ENCODE measurements at regions of chr6 and their contacts with region 1.

Region 1: GRCh38 chr6:157993076-157993475 is 11.4 kb downstream of the SYNJ2 start:
- DNase-seq: no peak
- H3K4me3 ChIP-seq: no peak overlapping the region
- H3K27ac ChIP-seq: no peak overlapping the region
- H3K4me1 ChIP-seq: peaks cover 28% of the 10 kb centered on the region
- H3K27me3 ChIP-seq: no peaks in the 10 kb centered on the region
- CTCF ChIP-seq: no peak

Region 2: DNA sequence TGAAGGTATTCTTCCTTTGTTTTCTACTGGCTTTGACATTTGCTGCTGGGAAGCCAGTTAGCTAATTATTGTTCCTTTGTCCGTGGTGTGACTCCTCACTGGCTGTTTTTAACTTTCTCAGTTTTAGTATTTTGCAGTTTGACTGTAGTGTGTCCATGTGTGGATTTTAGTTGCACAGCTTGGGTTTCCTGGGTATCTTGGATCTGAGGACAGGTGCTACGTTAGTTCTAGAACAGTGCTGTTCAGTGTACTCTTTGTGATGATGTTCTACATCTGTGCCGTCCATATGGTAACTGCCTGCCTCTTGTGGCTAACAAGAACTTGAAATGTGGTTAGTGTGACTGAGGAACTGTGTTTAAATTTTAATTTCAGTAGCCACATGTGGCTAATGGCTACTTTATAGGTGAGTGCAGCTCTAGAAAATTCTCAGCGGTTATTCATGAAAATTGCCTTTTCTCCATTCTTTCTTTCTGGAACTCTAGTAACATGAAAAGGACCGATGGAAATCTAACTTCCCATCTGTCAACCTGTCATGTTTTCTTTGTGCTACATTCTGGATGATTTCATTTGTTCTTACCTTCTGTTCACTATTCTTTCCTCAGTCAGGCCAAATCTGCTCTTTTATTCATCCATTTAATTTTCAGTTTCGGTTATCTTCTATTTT is 162.6 kb before region 1 on chr6:
- CTCF ChIA-PET with region 1: no interaction called
- dilution Hi-C with region 1: no loop called
- in situ Hi-C with region 1: no loop called
- intact Hi-C with region 1: no loop called
- DNase-seq: peak; percentile 16
- H3K4me3 ChIP-seq: no peak overlapping the region
- H3K27ac ChIP-seq: no peak overlapping the region
- H3K4me1 ChIP-seq: peaks cover 45% of the 10 kb centered on the region
- H3K27me3 ChIP-seq: no peaks in the 10 kb centered on the region
- CTCF ChIP-seq: no peak

Region 3: GRCh38 chr6:158026054-158026900 is 33.2 kb after region 1 on chr6:
- CTCF ChIA-PET with region 1: interaction called, 25 read pairs
- dilution Hi-C with region 1: no loop called
- in situ Hi-C with region 1: no loop called
- intact Hi-C with region 1: no loop called
- DNase-seq: peak; percentile 75
- H3K4me3 ChIP-seq: no peak overlapping the region
- H3K27ac ChIP-seq: peak overlapping the region; percentile 61
- H3K4me1 ChIP-seq: peaks cover 22% of the 10 kb centered on the region
- H3K27me3 ChIP-seq: no peaks in the 10 kb centered on the region
- CTCF ChIP-seq: peak; percentile 36 to 49

Region 4: DNA sequence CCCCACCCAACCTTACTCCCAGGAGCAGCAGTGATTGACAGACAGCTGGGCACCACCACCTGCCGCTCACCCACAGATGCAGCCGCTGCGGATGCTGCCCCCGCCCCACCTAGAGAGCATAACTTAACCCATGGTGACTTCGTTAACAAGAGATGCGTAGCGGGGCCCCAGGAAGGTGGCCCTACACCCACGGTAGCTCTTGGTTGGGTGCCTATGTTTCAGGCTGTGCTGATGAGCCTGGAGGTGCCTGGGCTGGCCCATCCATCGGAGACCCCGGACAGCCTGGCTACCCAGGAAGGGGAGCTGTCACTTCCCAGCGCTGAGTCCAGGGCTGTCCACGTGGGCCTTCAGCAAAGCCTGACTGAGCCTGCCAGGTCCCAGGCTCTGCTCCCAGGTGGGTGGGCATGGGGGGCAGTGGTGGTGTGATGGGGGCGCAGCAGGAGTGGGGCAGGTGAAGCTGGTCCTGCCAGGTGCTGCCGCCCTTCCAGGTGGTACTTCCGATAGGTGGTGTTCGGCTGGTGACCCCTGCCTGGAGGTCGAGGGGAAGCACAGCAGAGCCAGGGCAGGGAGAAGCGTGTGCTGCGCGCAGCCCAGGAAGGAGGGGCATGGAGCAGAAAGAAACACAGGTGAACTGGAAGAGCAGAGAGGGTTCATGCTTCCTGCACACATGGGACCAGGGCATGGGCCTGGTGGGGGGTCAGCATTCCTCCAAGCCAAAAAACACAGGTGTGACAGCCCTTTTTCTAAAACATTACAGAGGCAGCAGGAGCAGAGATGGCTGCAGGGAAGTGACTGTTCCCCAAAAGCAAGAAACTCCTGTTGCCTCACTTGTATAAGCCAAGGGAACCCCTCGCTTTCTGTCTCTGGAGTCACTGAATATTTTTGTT is 45.5 kb after region 1 on chr6:
- CTCF ChIA-PET with region 1: no interaction called
- dilution Hi-C with region 1: no loop called
- in situ Hi-C with region 1: no loop called
- intact Hi-C with region 1: no loop called
- DNase-seq: no peak
- H3K4me3 ChIP-seq: no peak overlapping the region
- H3K27ac ChIP-seq: no peak overlapping the region
- H3K4me1 ChIP-seq: peaks cover 44% of the 10 kb centered on the region
- H3K27me3 ChIP-seq: no peaks in the 10 kb centered on the region
- CTCF ChIP-seq: no peak

Region 5: GRCh38 chr6:158262755-158263154 is 269.7 kb after region 1 on chr6:
- CTCF ChIA-PET with region 1: no interaction called
- dilution Hi-C with region 1: no loop called
- in situ Hi-C with region 1: no loop called
- intact Hi-C with region 1: no loop called
- DNase-seq: no peak
- H3K4me3 ChIP-seq: no peak overlapping the region
- H3K27ac ChIP-seq: no peak overlapping the region
- H3K4me1 ChIP-seq: no peaks in the 10 kb centered on the region
- H3K27me3 ChIP-seq: no peaks in the 10 kb centered on the region
- CTCF ChIP-seq: no peak